Dendritic cell treated with granulocyte-macrophage colony-stimulating factor and Interleukin-4, amounts not matched to agents 40 ng/mL and 50 ng/mL, for 4 days (primary cell): ENCODE measurements at regions of chr9 and their contacts with region 1.

Region 1: DNA sequence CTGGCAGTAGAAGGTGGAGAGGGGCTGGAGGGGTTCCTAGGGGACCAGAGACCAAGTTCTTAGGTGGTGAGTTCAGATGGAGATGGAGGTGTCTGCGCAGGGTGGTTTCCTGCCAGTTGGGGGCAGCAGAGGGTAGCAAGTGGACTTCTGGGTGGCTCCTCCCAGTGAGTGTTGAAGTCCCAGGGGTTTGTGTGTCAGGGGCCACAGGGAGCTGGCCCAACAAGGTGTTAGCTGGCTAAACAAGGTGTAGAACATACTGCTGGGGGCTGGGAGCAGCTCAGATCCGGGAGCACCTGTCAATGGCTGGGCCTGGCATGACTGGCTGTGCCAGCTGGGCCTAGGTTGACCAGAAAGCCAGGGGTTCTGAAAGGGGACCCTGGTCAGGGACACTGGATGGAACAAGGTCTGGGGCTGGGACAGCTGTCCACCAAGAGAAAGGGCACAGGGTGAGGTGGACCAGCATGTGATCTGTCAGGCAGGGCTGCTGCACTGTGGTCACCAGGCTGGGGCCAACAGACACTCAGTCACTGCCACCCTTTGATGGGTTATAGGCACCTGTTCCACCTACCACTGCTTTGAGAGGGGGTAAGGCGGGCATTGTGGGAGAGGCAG is 35.6 kb downstream of the DAB2IP start:
- H3K4me3 Mint-ChIP-seq: no peak overlapping the region
- H3K27ac Mint-ChIP-seq: no peak overlapping the region
- H3K4me1 Mint-ChIP-seq: no peaks in the 10 kb centered on the region
- H3K27me3 Mint-ChIP-seq: peaks cover 66% of the 10 kb centered on the region

Region 2: GRCh38 chr9:121551985-121552753 is 134.9 kb before region 1 on chr9:
- intact Hi-C with region 1: loop called (anchors 2 kb)
- H3K4me3 Mint-ChIP-seq: no peak overlapping the region
- H3K27ac Mint-ChIP-seq: no peak overlapping the region
- H3K4me1 Mint-ChIP-seq: peaks cover 8% of the 10 kb centered on the region
- H3K27me3 Mint-ChIP-seq: peaks cover 33% of the 10 kb centered on the region

Region 3: DNA sequence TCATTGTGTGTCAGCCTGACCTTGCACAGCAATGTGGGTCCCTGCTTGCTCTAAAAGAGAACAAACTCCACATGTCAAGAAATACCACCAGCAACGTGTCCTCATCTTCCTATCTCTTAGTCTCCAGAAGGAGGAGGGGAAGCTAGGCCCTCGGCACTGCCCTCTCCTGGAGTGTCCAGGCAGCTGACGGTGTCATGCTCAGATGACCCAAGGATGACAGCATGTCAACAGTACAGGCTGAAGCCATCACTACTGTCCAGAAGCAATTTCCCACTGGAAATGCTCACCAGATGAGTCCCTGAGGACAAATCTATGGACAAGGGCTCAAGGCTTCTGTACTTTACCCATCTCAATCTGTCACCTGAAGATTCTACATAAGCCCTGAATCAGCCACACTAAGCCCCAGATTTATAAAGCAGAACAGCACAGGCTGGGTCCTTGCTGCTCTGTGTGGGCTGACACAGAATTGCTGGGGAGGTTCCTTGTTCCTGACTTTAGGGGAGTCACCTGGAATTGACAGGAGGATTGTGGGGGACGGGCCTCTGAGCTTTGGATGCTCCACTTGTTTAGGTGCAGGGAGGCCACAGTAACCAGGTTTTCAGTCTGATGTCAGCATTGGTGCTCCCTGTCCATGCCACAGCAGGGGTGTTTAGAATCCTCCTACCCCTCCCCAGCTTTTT is 174.6 kb after region 1 on chr9:
- intact Hi-C with region 1: loop called (anchors 10 kb)
- H3K4me3 Mint-ChIP-seq: no peak overlapping the region
- H3K27ac Mint-ChIP-seq: no peak overlapping the region
- H3K4me1 Mint-ChIP-seq: no peaks in the 10 kb centered on the region
- H3K27me3 Mint-ChIP-seq: no peaks in the 10 kb centered on the region

Region 4: DNA sequence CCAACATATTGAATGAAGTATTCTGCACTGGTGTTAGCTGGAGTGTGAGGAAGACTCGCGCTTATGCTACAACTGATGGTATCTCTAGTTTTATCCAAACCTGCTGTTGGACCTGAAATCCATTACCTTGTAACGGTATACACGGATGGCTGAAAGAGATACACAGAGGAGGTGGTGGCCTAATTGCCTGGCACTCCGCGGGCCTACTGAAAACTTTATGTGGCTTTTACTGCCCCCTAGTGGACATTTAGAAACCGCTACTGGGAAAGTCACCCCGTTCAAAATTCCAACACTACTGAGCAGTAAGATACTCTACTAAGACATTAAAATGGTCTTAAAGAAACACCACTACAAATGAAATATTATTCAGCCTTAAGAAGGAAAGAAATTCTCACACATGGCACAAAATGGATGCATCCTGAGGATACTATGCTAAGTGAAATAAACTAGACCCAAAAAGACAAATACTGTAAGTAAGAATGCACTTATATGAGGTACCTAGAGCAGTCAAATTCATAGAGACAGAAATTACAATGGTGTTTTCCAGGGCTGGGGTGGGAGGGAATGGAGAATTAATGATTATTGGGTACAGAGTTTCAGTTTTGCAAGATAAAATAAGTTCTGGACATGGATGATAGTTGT is 305.7 kb after region 1 on chr9:
- intact Hi-C with region 1: loop called (anchors 1 kb)
- H3K4me3 Mint-ChIP-seq: no peak overlapping the region
- H3K27ac Mint-ChIP-seq: no peak overlapping the region
- H3K4me1 Mint-ChIP-seq: peaks cover 5% of the 10 kb centered on the region
- H3K27me3 Mint-ChIP-seq: no peaks in the 10 kb centered on the region